ENCODE measurements at regions of chr7 and their contacts with region 1.

Region 1: GRCh38 chr7:100705753-100706671 is at the start of gene POP7:
- DNase-seq: peak; percentile 95 to 99 (median 98)
- ATAC-seq: peak; percentile 93
- H3K4me3 ChIP-seq: peak within 1 kb of the TSS; percentile 100
- H3K4me3 Mint-ChIP-seq: peak within 1 kb of the TSS; percentile 98
- H3K27ac ChIP-seq: peak within 1 kb of the TSS; percentile 82 to 93
- H3K27ac Mint-ChIP-seq: peak within 1 kb of the TSS; percentile 85
- H3K4me1 ChIP-seq: peaks cover 24% of the 10 kb centered on the region
- H3K4me1 Mint-ChIP-seq: peaks cover 14% of the 10 kb centered on the region
- H3K27me3 ChIP-seq: no peaks in the 10 kb centered on the region
- H3K27me3 Mint-ChIP-seq: no peaks in the 10 kb centered on the region
- CTCF ChIP-seq: no peak
- total RNA-seq, gene POP7: 7.4 to 7.5 TPM

Region 2: DNA sequence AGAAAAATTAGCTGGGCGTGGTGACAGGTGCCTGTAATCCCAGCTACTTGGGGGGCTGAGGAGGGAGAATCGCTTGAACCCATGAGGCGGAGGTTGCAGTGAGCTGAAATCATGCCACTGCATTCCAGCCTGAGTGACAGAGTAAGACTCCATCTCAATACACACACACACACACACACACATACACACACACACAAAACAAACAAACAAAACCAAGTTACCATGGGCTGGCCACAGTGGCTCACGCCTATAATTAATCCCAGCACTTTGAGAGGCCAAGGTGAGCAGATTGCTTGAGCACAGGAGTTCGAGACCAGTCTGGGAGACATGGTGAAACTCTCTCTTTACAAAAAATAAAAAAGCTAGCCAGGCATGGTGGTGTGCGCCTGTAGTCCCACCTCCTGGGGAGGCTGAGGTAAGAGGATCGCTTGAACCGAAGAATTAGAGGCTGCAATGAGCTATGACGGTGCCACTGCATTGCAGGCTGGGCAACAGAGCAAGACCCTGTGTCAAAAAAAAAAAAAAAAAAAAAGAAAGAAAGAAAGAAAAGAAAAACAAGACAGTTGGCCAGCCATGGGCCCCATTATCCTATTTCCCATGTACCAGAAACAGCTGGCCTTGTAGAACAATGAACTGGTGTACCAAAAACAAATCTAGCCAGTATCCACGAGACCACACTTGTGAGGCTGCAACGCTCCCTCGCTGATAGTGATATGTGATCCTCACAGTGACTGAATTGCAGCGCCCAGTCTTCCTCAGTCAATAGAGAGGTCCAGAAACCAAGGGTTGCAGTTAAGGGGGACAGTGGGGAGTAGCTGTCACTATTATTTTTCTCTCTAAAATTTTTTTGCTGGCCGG is 173.6 kb before region 1 on chr7:
- CTCF ChIA-PET with region 1: no interaction called
- POLR2A ChIA-PET with region 1: no interaction called
- intact Hi-C with region 1: no loop called
- DNase-seq: no peak
- ATAC-seq: no peak
- H3K4me3 ChIP-seq: no peak overlapping the region
- H3K4me3 Mint-ChIP-seq: no peak overlapping the region
- H3K27ac ChIP-seq: no peak overlapping the region
- H3K27ac Mint-ChIP-seq: no peak overlapping the region
- H3K4me1 ChIP-seq: no peaks in the 10 kb centered on the region
- H3K4me1 Mint-ChIP-seq: no peaks in the 10 kb centered on the region
- H3K27me3 ChIP-seq: no peaks in the 10 kb centered on the region
- H3K27me3 Mint-ChIP-seq: no peaks in the 10 kb centered on the region
- CTCF ChIP-seq: no peak

Region 3: GRCh38 chr7:100586266-100587025 is 119.6 kb before region 1 on chr7 and contains the start of gene FBXO24:
- CTCF ChIA-PET with region 1: interaction called, 4 read pairs
- POLR2A ChIA-PET with region 1: interaction called, 32 read pairs
- intact Hi-C with region 1: no loop called
- DNase-seq: peak; percentile 98 to 100 (median 99)
- ATAC-seq: peak; percentile 82
- H3K4me3 ChIP-seq: peak within 1 kb of the TSS; percentile 95
- H3K4me3 Mint-ChIP-seq: peak within 1 kb of the TSS; percentile 97
- H3K27ac ChIP-seq: peak within 1 kb of the TSS; percentile 93 to 96
- H3K27ac Mint-ChIP-seq: no peak within 1 kb of the TSS
- H3K4me1 ChIP-seq: peaks cover 50% of the 10 kb centered on the region
- H3K4me1 Mint-ChIP-seq: peaks cover 35% of the 10 kb centered on the region
- H3K27me3 ChIP-seq: peaks cover 0 to 5% of the 10 kb centered on the region in 2 experiments
- H3K27me3 Mint-ChIP-seq: no peaks in the 10 kb centered on the region
- CTCF ChIP-seq: no peak
- total RNA-seq, gene FBXO24: 0.66 to 0.78 TPM

Region 4: GRCh38 chr7:100673300-100673941 is 32.6 kb before region 1 on chr7 and contains the start of gene GNB2:
- CTCF ChIA-PET with region 1: interaction called, 5 read pairs
- POLR2A ChIA-PET with region 1: interaction called, 20 read pairs
- intact Hi-C with region 1: no loop called
- DNase-seq: peak; percentile 91 to 99 (median 97)
- ATAC-seq: peak; percentile 51
- H3K4me3 ChIP-seq: peak within 1 kb of the TSS; percentile 94
- H3K4me3 Mint-ChIP-seq: peak within 1 kb of the TSS; percentile 99
- H3K27ac ChIP-seq: peak within 1 kb of the TSS; percentile 89 to 94
- H3K27ac Mint-ChIP-seq: peak within 1 kb of the TSS; percentile 92
- H3K4me1 ChIP-seq: peaks cover 33% of the 10 kb centered on the region
- H3K4me1 Mint-ChIP-seq: peaks cover 22% of the 10 kb centered on the region
- H3K27me3 ChIP-seq: no peaks in the 10 kb centered on the region
- H3K27me3 Mint-ChIP-seq: no peaks in the 10 kb centered on the region
- CTCF ChIP-seq: no peak
- total RNA-seq, gene GNB2: 87.8 to 91.9 TPM

Region 5: DNA sequence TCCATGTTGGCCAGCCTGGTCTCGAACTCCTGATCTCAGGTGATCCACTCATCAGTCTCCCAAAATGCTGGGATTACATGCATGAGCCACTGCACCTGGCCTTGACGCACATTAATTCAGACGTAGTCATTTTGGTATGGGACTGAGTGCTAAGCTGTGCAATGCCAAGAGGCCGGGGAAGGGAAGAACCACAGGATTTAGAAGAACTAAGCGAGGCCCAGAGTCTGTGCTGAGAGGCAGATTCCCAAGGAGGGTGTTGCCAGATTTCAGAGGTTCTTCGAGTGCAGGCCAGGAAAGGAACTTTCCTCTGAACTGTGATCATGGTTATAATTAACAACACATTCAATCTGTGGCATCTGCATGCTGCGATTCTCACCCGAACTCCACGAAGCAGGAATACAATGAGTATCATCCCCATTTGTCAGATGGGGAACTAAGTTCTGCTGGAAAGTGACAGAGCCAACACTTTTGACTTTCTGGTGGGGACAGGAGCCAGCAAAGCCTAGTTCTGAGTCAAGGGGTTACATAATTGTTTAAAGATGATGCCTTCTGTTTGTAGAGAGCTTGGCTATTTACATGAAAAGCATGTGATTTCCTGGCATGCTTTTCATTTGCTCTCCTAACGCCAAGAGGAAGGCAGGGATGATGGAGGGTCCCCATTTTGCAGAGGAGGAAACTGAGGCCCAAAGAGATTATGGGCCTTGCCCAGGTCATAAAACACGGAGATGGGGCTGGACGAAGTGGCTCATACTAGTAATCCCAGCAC is 21.2 kb after region 1 on chr7:
- CTCF ChIA-PET with region 1: interaction called, 5 read pairs
- POLR2A ChIA-PET with region 1: interaction called, 5 read pairs
- intact Hi-C with region 1: loop called (anchors 1 kb)
- DNase-seq: no peak
- ATAC-seq: no peak
- H3K4me3 ChIP-seq: no peak overlapping the region
- H3K4me3 Mint-ChIP-seq: no peak overlapping the region
- H3K27ac ChIP-seq: no peak overlapping the region
- H3K27ac Mint-ChIP-seq: no peak overlapping the region
- H3K4me1 ChIP-seq: peaks cover 3% of the 10 kb centered on the region
- H3K4me1 Mint-ChIP-seq: peaks cover 5% of the 10 kb centered on the region
- H3K27me3 ChIP-seq: peaks cover 2 to 16% of the 10 kb centered on the region in 2 experiments
- H3K27me3 Mint-ChIP-seq: peaks cover 40% of the 10 kb centered on the region
- CTCF ChIP-seq: no peak

Region 6: GRCh38 chr7:100874577-100875355 is 168.8 kb after region 1 on chr7 and contains the start of gene SRRT:
- CTCF ChIA-PET with region 1: no interaction called
- POLR2A ChIA-PET with region 1: interaction called, 16 read pairs
- intact Hi-C with region 1: no loop called
- DNase-seq: peak; percentile 98 to 99 (median 98)
- ATAC-seq: peak; percentile 95
- H3K4me3 ChIP-seq: peak within 1 kb of the TSS; percentile 96
- H3K4me3 Mint-ChIP-seq: peak within 1 kb of the TSS; percentile 100
- H3K27ac ChIP-seq: peak within 1 kb of the TSS; percentile 91
- H3K27ac Mint-ChIP-seq: peak within 1 kb of the TSS; percentile 96
- H3K4me1 ChIP-seq: peaks cover 48% of the 10 kb centered on the region
- H3K4me1 Mint-ChIP-seq: peaks cover 49% of the 10 kb centered on the region
- H3K27me3 ChIP-seq: no peaks in the 10 kb centered on the region
- H3K27me3 Mint-ChIP-seq: no peaks in the 10 kb centered on the region
- CTCF ChIP-seq: no peak
- total RNA-seq, gene SRRT: 355 to 382 TPM

Region 7: DNA sequence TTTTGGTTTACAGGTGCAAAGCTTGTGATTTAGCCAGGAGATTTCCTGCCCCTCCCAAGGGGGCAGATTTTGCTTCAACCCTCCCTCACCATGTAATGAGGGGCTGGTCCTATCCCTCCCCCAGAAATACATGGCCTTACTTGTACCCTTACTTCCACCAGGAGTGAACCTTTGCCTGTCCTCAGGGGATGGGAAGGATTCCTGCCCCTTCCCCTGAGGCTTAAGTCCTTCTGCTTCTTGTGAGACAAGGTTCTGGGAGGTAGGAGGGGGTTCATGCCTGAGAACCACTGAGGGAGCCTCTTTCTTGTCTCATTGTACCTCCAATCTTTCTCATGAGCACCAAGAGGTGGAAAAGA is 223.7 kb after region 1 on chr7:
- CTCF ChIA-PET with region 1: no interaction called
- POLR2A ChIA-PET with region 1: no interaction called
- intact Hi-C with region 1: no loop called
- DNase-seq: no peak
- ATAC-seq: no peak
- H3K4me3 ChIP-seq: no peak overlapping the region
- H3K4me3 Mint-ChIP-seq: no peak overlapping the region
- H3K27ac ChIP-seq: no peak overlapping the region
- H3K27ac Mint-ChIP-seq: no peak overlapping the region
- H3K4me1 ChIP-seq: no peaks in the 10 kb centered on the region
- H3K4me1 Mint-ChIP-seq: no peaks in the 10 kb centered on the region
- H3K27me3 ChIP-seq: peaks cover 8% of the 10 kb centered on the region in 2 experiments
- H3K27me3 Mint-ChIP-seq: peaks cover 22% of the 10 kb centered on the region
- CTCF ChIP-seq: no peak

Region 8: GRCh38 chr7:101085162-101085987 is 379.4 kb after region 1 on chr7 and contains the start of gene TRIM56:
- CTCF ChIA-PET with region 1: interaction called, 3 read pairs
- POLR2A ChIA-PET with region 1: interaction called, 3 read pairs
- intact Hi-C with region 1: loop called in 1 of 2 experiments (anchors 10 kb)
- DNase-seq: peak; percentile 52 to 88 (median 70)
- ATAC-seq: peak; percentile 90
- H3K4me3 ChIP-seq: peak within 1 kb of the TSS; percentile 99
- H3K4me3 Mint-ChIP-seq: peak within 1 kb of the TSS; percentile 100
- H3K27ac ChIP-seq: peak within 1 kb of the TSS; percentile 91 to 92
- H3K27ac Mint-ChIP-seq: peak within 1 kb of the TSS; percentile 96
- H3K4me1 ChIP-seq: peaks cover 53% of the 10 kb centered on the region
- H3K4me1 Mint-ChIP-seq: peaks cover 28% of the 10 kb centered on the region
- H3K27me3 ChIP-seq: no peaks in the 10 kb centered on the region
- H3K27me3 Mint-ChIP-seq: no peaks in the 10 kb centered on the region
- CTCF ChIP-seq: no peak
- total RNA-seq, gene TRIM56: 29.9 to 31.8 TPM

Measured in CD4-positive, alpha-beta T cell (primary cell).